ENCODE measurements at regions of chr5 and their contacts with region 1.

Region 1: DNA sequence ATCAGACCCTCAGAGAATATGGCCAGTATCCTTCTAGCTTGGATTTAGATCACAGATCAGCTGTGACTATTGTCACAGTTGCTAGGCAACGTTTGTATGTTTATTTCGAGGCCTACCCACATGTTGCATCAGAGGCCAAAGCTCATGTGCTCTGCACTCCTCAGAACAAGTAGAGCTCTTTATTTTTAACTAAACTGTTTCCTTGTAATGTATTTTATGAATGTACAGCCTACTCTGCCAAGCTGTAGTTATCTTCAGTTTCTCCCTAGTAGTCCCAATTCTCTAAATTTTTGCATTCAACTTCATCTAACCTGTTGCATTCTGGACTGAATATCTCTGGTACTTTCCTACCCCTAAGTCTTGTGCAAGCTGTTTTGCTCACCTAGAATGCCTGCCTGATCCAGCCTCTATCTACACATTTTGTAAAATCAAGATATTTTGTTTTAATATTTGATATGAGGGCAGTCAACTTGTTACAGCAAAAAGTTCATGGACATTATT is 52.8 kb downstream of the CAST start:
- DNase-seq: peak; percentile 72 to 83
- H3K4me3 ChIP-seq: no peak overlapping the region
- H3K4me3 Mint-ChIP-seq: peak overlapping the region; percentile 34
- H3K27ac Mint-ChIP-seq: peak overlapping the region; percentile 92
- H3K4me1 ChIP-seq: peaks cover 36% of the 10 kb centered on the region
- H3K4me1 Mint-ChIP-seq: peaks cover 53% of the 10 kb centered on the region
- H3K27me3 ChIP-seq: no peaks in the 10 kb centered on the region
- H3K27me3 Mint-ChIP-seq: no peaks in the 10 kb centered on the region
- CTCF ChIP-seq: no peak

Region 2: DNA sequence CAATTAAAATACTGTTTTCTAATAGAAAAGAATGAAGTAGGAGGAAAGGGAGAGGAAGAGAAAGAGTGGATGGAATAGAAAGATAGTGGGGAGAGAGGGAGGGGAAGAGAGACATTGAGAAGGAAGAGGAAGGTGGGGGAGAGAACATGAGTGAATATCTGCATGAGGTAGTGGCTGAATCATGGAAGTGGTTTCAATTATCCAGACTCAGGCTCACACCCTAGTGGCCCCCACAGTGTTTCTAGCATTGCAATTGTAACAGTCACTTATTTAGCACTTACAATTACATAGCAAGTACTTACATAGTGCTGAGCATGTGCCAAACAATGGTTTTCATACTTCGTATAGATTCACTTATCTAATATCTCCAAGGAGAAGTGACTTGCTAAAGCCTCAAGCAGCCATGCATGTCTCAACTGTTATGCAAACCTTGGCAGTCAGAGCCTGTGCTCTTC is 19.9 kb after region 1 on chr5:
- CTCF ChIA-PET with region 1: interaction called, 7 read pairs
- POLR2A ChIA-PET with region 1: no interaction called
- intact Hi-C with region 1: loop called (anchors 2 kb)
- DNase-seq: no peak
- H3K4me3 ChIP-seq: no peak overlapping the region
- H3K4me3 Mint-ChIP-seq: no peak overlapping the region
- H3K27ac Mint-ChIP-seq: no peak overlapping the region
- H3K4me1 ChIP-seq: peaks cover 18% of the 10 kb centered on the region
- H3K4me1 Mint-ChIP-seq: peaks cover 22% of the 10 kb centered on the region
- H3K27me3 ChIP-seq: no peaks in the 10 kb centered on the region
- H3K27me3 Mint-ChIP-seq: no peaks in the 10 kb centered on the region
- CTCF ChIP-seq: no peak

Region 3: GRCh38 chr5:96790961-96791504 is 76.0 kb after region 1 on chr5:
- CTCF ChIA-PET with region 1: no interaction called
- POLR2A ChIA-PET with region 1: no interaction called
- intact Hi-C with region 1: no loop called
- DNase-seq: no peak
- H3K4me3 ChIP-seq: no peak overlapping the region
- H3K4me3 Mint-ChIP-seq: no peak overlapping the region
- H3K27ac Mint-ChIP-seq: peak overlapping the region; percentile 26
- H3K4me1 ChIP-seq: peaks cover 7% of the 10 kb centered on the region; the same call in 1 of the 2 replicates
- H3K4me1 Mint-ChIP-seq: peaks cover 17% of the 10 kb centered on the region
- H3K27me3 ChIP-seq: no peaks in the 10 kb centered on the region
- H3K27me3 Mint-ChIP-seq: no peaks in the 10 kb centered on the region
- CTCF ChIP-seq: no peak

Measured in Caco-2 (cell line).